ENCODE measurements at regions of chr17 and their contacts with region 1.

Region 1: DNA sequence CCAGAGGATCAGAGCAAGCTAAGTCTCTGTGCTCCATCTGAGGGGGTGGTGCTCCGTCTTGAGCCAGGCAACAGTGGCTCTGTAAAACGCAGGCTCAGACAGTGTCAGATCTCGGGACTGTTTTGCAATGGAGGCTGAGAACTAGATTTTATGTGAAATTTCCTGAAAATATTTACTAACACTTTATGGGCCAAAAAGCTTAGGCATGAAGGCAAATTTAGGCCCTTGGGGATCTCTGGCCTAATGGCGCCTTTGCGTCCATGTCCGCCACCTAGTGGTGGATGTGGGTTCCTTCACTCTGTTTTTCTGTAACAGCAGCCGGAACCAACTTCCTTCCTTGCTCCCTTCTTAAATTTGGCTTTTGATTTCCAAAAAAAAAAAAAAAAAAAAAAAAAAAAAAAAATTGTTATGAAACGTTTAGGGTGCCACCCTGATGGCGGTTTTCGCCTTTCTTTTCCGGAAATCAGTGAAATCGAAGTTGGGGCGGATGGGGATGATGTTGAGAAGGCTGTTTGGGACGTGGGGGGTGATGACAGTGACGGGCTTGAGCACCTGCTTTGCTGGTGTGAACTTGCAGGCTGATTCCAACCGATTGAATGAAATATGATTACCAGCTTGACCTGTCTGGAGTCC is 14.0 kb upstream of the ELAC2 start:
- DNase-seq: peak; percentile 64
- CTCF ChIP-seq: peak; percentile 78

Region 2: DNA sequence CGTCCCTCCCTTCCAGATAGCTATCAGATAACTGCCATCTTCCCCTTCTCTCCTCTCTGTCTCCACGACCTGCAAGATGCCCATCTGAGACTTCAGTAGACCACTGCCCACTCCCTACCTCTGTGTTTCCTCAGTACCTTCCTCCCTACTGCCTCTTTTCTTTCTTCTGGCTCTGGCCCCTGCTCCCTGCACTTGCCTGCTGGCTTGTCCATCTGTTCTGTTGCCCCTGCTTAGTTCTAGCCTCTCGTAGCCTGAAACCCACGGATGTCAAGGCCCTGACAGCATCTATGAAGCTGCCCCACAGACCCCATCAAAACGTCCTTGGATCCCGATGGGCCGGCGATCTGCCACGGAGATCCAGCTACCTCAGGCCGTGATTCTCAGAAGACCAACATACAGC is 67.0 kb before region 1 on chr17:
- CTCF ChIA-PET with region 1: interaction called, 13 read pairs
- POLR2A ChIA-PET with region 1: no interaction called
- DNase-seq: no peak
- CTCF ChIP-seq: no peak

Region 3: DNA sequence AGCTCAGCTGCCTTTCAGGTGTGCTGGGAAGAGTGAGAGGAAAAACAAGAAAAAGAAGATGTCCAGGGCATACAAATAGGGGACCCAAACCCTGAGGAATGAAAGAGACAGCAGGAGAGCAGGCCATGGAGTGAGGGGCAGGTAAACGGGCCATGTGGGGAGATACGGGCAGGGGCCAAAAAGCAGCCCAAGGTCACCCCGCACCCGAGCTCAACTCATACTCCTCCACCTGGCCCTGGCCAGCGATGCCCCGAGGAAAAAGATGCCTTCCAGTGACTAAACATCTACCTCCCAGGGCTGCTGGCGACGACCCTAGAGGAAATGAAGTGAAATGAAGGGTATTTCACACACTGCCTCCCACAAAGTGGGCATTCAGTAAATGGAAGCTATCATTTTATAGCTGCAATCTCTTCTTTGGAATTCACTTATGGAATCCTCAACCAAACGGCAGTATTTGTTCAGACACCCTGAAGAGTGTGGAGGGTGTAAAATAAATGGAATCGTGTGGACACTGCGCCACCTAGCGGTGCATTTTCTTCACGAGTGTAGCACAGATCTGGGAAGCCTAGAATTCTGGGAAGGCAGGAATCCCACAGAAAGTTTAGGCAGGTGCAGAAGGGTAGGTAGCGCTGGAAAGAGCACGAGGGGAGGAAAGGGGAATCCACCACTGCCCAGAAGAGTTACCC is 28.9 kb before region 1 on chr17:
- CTCF ChIA-PET with region 1: interaction called, 41 read pairs
- POLR2A ChIA-PET with region 1: no interaction called
- DNase-seq: peak; percentile 72
- CTCF ChIP-seq: peak; percentile 70

Region 4: DNA sequence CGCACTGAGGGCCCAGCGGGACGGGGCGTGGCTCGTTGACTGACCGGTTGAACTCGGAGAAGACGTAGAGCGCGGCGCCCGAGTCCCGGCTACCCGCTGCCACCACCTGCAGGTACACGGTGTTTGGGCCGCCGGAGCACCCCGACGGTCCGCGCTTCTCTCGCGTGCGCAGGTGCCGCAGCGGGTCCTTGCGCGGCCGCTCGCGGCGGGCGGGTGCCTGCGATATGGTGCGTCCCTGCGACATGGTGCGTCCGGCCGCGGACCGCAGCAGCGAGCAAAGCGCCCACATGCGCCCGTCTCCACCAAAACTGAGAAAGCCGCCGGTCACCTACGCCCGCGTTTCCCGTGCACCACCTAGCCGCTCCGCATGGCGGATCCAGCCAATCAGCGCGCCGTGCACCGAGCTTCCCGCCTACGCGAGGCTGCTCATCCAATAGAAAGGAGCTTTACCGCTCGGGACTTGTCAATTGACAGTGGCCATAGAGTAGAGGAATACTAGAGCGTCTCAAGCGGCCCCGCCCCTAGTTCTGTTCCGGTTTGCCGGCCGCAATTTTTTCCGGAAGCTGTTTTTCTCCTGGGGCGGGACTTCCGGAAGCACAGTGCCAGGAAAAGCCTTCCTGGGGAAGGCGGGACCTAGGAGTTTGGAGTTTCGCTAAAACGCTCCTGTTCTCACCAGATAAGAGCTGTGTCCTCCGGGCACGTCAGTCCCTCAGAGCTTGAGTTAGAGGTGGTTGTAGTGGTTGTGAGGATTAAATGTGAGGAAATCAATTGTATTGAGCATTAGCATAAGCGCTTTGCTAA is 14.0 kb before region 1 on chr17 and contains the start of gene ELAC2:
- CTCF ChIA-PET with region 1: interaction called, 193 read pairs
- POLR2A ChIA-PET with region 1: interaction called, 3 read pairs
- DNase-seq: peak; percentile 96
- CTCF ChIP-seq: no peak

Region 5: GRCh38 chr17:13055131-13055530 is 23.3 kb after region 1 on chr17:
- CTCF ChIA-PET with region 1: interaction called, 12 read pairs
- POLR2A ChIA-PET with region 1: no interaction called
- DNase-seq: no peak
- CTCF ChIP-seq: no peak